ENCODE measurements at regions of chr11 and their contacts with region 1.

Region 1: GRCh38 chr11:73350908-73351636 is 25.1 kb upstream of the RELT start:
- DNase-seq: peak; percentile 48
- ATAC-seq: peak; percentile 78
- H3K4me3 ChIP-seq: peak overlapping the region in 1 of 2 experiments; percentile 2; a peak in 1 of 4 replicates
- H3K27ac ChIP-seq: no peak overlapping the region
- H3K4me1 ChIP-seq: peaks cover 3% of the 10 kb centered on the region; the same call in 1 of the 2 replicates
- H3K27me3 ChIP-seq: no peaks in the 10 kb centered on the region
- CTCF ChIP-seq: peak; percentile 100

Region 2: DNA sequence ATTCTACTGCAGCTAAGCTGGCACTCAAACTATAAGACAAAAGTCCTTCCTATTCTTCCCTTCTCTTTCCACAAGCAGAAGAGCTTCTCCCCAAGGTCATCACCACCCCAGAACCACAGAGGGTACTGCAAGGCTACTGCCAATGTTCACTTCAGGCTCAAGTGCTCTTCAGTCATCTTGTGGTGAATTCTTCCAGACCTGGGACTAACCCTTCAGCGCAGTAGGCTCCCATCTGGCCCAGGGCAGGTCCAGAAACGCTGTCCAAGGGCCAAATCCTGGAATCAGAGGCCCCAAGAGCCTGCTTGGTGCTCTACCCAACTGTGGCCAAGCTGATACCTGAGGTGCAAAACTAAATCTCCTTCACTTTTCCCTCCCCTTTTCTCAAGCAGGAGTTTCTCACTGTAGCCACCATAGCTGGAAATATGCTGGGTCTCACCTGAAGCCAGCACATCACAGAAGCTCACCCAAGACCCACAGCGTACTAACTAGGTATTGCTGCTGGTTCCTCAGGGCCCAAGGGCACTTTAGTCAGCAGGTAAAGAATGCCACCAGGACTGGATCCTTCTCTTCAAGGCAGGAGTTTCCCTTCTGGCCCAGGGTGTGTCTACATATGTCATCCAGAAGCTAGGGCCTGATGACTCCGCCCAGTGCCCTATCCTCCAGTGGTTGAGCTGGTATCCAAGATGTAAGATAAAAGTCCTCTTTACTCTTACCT is 236.8 kb before region 1 on chr11:
- CTCF ChIA-PET with region 1: no interaction called
- POLR2A ChIA-PET with region 1: no interaction called
- in situ Hi-C with region 1: no loop called
- intact Hi-C with region 1: no loop called
- DNase-seq: no peak
- ATAC-seq: no peak
- H3K4me3 ChIP-seq: no peak overlapping the region
- H3K27ac ChIP-seq: no peak overlapping the region
- H3K4me1 ChIP-seq: no peaks in the 10 kb centered on the region
- H3K27me3 ChIP-seq: no peaks in the 10 kb centered on the region
- CTCF ChIP-seq: no peak

Region 3: GRCh38 chr11:73335204-73335923 is 15.7 kb before region 1 on chr11:
- CTCF ChIA-PET with region 1: interaction called, 15 read pairs
- POLR2A ChIA-PET with region 1: interaction called, 5 read pairs
- in situ Hi-C with region 1: no loop called
- intact Hi-C with region 1: no loop called
- DNase-seq: peak; percentile 77
- ATAC-seq: peak; percentile 70
- H3K4me3 ChIP-seq: no peak overlapping the region
- H3K27ac ChIP-seq: peak overlapping the region; percentile 55
- H3K4me1 ChIP-seq: peaks cover 39% of the 10 kb centered on the region
- H3K27me3 ChIP-seq: no peaks in the 10 kb centered on the region
- CTCF ChIP-seq: peak; percentile 100

Region 4: GRCh38 chr11:73393479-73394380 is 42.7 kb after region 1 on chr11:
- CTCF ChIA-PET with region 1: interaction called, 50 read pairs
- POLR2A ChIA-PET with region 1: no interaction called
- in situ Hi-C with region 1: no loop called
- intact Hi-C with region 1: loop called (anchors 1 kb)
- DNase-seq: peak; percentile 47
- ATAC-seq: peak; percentile 89
- H3K4me3 ChIP-seq: no peak overlapping the region
- H3K27ac ChIP-seq: no peak overlapping the region; the same call in 1 of the 2 replicates
- H3K4me1 ChIP-seq: no peaks in the 10 kb centered on the region
- H3K27me3 ChIP-seq: no peaks in the 10 kb centered on the region
- CTCF ChIP-seq: peak; percentile 93

Measured in Panc1 (cell line).